ENCODE measurements at regions of chr11 and their contacts with region 1.

Region 1: GRCh38 chr11:58549644-58550043 is 26.0 kb downstream of the LPXN start:
- DNase-seq: no peak
- H3K4me3 ChIP-seq: no peak overlapping the region
- H3K27ac ChIP-seq: no peak overlapping the region
- H3K4me1 ChIP-seq: no peaks in the 10 kb centered on the region
- H3K27me3 ChIP-seq: no peaks in the 10 kb centered on the region
- CTCF ChIP-seq: no peak

Region 2: GRCh38 chr11:57085611-57086010 is 1464.0 kb before region 1 on chr11:
- CTCF ChIA-PET with region 1: no interaction called
- POLR2A ChIA-PET with region 1: no interaction called
- intact Hi-C with region 1: loop called (anchors 5 kb)
- DNase-seq: peak; percentile 7
- H3K4me3 ChIP-seq: no peak overlapping the region
- H3K27ac ChIP-seq: no peak overlapping the region
- H3K4me1 ChIP-seq: no peaks in the 10 kb centered on the region
- H3K27me3 ChIP-seq: peaks cover 5% of the 10 kb centered on the region
- CTCF ChIP-seq: 0 out of 2 replicates have a peak, but pooled peaks have one; percentile 25

Measured in A673 (cell line).